HepG2 (cell line): ENCODE measurements at regions of chr3 and their contacts with region 1.

Region 1: DNA sequence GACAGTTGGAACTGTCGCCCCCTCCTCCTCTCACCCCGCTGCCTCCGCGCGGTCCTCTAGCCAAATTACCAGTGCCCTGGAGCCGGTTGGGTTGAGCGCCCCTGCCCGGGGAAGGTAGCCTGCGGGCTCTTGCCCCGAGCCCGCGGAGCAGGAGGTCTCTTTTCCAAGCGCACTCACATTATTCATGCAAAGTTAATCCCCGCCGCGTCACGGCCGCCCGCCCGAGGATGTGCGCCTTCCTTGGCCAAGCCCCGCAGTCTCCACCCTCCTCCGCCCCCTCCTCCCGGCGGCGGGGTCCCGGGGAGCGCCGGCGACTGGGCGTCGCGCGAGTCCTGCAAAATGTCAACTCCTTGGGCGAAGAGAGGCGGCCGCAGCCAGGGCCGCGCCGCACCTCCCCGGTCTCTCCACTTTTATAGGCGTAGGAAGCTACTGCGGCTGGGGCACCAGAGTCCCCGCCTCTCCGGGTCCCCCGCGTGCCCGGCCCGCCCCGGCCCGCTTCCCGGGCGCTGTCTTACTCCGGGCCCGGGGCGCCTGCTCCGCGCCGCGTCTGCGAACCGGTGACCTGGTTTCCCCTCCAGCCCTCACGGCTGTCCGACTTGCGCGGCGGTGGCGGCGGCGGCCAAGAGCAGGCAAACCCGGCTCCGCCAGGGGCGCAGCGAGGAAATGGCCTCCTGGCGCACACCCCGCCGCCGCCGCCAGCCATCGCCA is at the start of gene THRB:
- DNase-seq: peak; percentile 56
- ATAC-seq: peak; percentile 82
- H3K4me3 ChIP-seq: peak within 1 kb of the TSS; percentile 83 to 96 (median 92)
- H3K27ac ChIP-seq: peak within 1 kb of the TSS; percentile 93
- H3K4me1 ChIP-seq: peaks cover 41% of the 10 kb centered on the region
- H3K27me3 ChIP-seq: no peaks in the 10 kb centered on the region; a peak in 1 of 5 replicates
- CTCF ChIP-seq: no peak
- EP300 ChIP-seq: no peak
- POLR2A ChIP-seq: peak in 1 of 2 experiments; percentile 37; a peak in 1 of 4 replicates
- RAD21 ChIP-seq: peak; percentile 60
- total RNA-seq, gene THRB: 22.7 and 30.1 TPM in 2 replicates

Region 2: GRCh38 chr3:24191801-24192403 is 302.9 kb before region 1 on chr3:
- CTCF ChIA-PET with region 1: no interaction called
- POLR2A ChIA-PET with region 1: no interaction called
- in situ Hi-C with region 1: no loop called
- intact Hi-C with region 1: no loop called
- DNase-seq: no peak
- ATAC-seq: no peak
- H3K4me3 ChIP-seq: no peak overlapping the region
- H3K27ac ChIP-seq: no peak overlapping the region
- H3K4me1 ChIP-seq: no peaks in the 10 kb centered on the region
- H3K27me3 ChIP-seq: no peaks in the 10 kb centered on the region
- CTCF ChIP-seq: no peak
- EP300 ChIP-seq: no peak
- POLR2A ChIP-seq: no peak
- RAD21 ChIP-seq: no peak

Region 3: DNA sequence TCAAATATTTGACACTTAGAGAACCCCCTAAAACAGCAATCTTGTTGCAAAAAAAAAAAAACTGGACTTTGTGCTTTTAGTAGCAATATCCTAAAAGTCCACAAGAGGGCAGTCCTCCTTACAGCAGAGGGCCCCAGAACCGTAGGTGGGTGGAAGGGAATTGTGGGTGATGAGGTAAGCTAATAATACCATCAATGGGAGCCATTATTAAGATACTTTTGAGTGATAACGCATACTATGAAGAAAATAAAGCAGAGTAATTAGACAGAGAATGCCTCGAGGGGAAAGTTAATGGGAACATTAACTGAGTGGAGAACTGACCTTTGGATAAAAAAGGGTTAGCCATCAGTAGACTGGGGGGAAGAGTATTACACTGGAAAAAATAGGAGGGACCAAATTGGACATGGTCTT is 230.0 kb before region 1 on chr3:
- CTCF ChIA-PET with region 1: interaction called, 35 read pairs
- POLR2A ChIA-PET with region 1: interaction called, 6 read pairs
- in situ Hi-C with region 1: loop called (anchors 5 kb)
- intact Hi-C with region 1: loop called (anchors 1 kb)
- DNase-seq: peak; percentile 53
- ATAC-seq: peak; percentile 73
- H3K4me3 ChIP-seq: no peak overlapping the region
- H3K27ac ChIP-seq: no peak overlapping the region
- H3K4me1 ChIP-seq: peaks cover 5% of the 10 kb centered on the region; the same call in 1 of the 2 replicates
- H3K27me3 ChIP-seq: no peaks in the 10 kb centered on the region
- CTCF ChIP-seq: peak; percentile 75
- EP300 ChIP-seq: no peak
- POLR2A ChIP-seq: no peak
- RAD21 ChIP-seq: peak; percentile 83

Region 4: DNA sequence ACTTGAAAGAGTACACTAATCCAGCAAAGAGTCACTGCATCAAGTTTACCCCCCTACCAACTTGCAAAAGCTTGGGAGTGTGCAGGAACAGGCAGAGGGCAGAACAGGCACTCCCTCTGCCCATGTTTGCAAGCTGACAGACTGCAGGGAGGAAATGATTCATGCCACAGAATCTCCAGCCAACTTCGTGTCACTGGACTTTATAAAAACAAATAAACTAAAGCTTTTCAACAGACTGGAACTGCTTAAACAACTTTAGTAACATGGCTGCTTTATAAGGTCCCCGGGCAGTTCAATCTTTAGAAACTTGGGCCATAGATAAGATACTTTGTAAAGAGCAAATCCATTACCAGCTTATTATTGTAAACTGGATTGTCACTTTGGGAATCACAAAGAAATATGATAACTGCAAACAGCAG is 129.6 kb before region 1 on chr3:
- CTCF ChIA-PET with region 1: no interaction called
- POLR2A ChIA-PET with region 1: interaction called, 25 read pairs
- in situ Hi-C with region 1: loop called (anchors 10 kb)
- intact Hi-C with region 1: no loop called
- DNase-seq: peak; percentile 90
- ATAC-seq: peak; percentile 96
- H3K4me3 ChIP-seq: peak overlapping the region in 1 of 3 experiments; percentile 20; a peak in 2 of 6 replicates
- H3K27ac ChIP-seq: peak overlapping the region; percentile 71
- H3K4me1 ChIP-seq: peaks cover 78% of the 10 kb centered on the region
- H3K27me3 ChIP-seq: no peaks in the 10 kb centered on the region
- CTCF ChIP-seq: peak; percentile 51
- EP300 ChIP-seq: peak in 1 of 2 experiments; percentile 76; a peak in 2 of 4 replicates
- POLR2A ChIP-seq: no peak
- RAD21 ChIP-seq: peak; percentile 47; the same call in 1 of the 2 replicates

Region 5: DNA sequence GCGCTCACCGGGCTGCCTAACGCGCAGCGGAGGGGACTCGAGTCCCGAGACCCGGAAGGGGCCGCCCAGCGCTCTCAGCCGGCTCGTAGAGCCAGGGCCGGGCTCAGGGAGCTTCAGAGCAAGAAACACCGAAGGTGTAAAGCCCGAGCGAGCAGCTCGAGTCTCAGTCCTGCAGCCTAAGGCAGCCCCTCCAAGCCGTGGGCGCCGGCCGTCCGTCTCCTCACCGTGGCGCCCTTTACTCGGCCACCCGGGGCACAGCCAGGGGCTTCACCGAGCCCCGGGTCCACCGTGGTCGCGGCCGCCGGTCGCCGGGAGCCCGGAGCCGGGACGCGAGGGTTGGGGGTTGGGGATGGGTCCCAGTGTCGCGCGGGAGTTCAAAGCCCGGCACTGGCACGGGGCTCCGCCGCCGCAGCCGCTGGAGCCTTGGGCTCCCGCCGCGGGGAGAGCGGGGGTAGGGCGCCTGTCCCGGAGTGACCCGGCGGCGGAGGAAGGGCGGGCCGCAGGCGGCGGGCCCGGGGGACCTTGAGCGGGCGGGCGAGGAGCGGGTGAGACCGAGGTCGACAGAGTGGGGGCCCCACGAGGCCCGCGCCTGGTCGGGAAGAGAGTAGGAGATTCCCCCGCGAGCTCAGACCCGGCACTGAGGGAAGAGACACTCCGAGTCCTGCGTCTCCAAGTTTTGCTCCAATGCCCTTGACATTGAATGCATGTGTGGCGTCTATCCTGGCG is 26.8 kb after region 1 on chr3:
- CTCF ChIA-PET with region 1: no interaction called
- POLR2A ChIA-PET with region 1: interaction called, 29 read pairs
- in situ Hi-C with region 1: no loop called
- intact Hi-C with region 1: loop called (anchors 1 kb)
- DNase-seq: peak; percentile 36
- ATAC-seq: peak; percentile 72
- H3K4me3 ChIP-seq: peak overlapping the region; percentile 82 to 93 (median 85)
- H3K27ac ChIP-seq: peak overlapping the region; percentile 92
- H3K4me1 ChIP-seq: peaks cover 65% of the 10 kb centered on the region
- H3K27me3 ChIP-seq: no peaks in the 10 kb centered on the region; a peak in 1 of 5 replicates
- CTCF ChIP-seq: peak; percentile 34
- EP300 ChIP-seq: no peak
- POLR2A ChIP-seq: peak in 1 of 2 experiments; percentile 30
- RAD21 ChIP-seq: peak; percentile 62